ENCODE measurements at regions of chr15 and their contacts with region 1.

Region 1: DNA sequence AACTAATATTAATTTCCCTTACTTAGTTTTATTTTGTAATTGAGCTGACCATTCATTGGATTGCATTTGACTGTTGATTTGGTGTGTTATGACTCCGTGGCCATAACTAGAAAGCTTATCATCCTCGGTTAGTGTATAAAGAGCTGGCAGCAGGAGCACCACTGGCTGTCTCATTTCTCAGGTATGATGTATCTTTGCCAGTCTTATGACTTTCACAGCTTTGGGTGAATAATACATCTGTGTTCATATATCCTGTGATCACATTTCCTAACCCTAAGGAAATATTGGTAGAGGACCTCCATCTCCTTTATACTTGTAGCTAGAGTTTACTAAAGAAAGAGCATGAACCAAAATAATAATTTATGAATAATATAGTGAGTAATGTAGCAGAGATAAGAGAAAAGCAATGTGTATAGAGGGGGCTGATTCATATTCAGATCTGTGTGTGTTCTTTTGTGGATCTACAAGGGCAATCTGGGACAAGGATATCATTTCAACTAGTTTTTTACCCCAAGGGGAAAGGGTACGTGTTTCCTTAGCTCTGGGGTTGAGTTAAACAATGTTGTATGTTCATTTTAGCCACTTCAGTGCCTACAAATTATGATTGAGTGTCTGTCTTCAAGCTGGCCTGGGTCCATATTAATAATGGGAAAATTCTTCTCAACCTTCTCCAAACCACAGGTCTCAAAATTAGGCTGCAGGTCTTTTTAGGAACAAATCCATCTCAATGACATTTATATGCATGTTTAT is 901.7 kb downstream of the NTRK3 start:
- DNase-seq: no peak
- ATAC-seq: no peak
- H3K4me3 ChIP-seq: no peak overlapping the region
- H3K27ac ChIP-seq: no peak overlapping the region
- H3K4me1 ChIP-seq: peaks cover 0 to 5% (median 0%) of the 10 kb centered on the region in 9 donors
- H3K27me3 ChIP-seq: no peaks in the 10 kb centered on the region
- CTCF ChIP-seq: no peak

Region 2: DNA sequence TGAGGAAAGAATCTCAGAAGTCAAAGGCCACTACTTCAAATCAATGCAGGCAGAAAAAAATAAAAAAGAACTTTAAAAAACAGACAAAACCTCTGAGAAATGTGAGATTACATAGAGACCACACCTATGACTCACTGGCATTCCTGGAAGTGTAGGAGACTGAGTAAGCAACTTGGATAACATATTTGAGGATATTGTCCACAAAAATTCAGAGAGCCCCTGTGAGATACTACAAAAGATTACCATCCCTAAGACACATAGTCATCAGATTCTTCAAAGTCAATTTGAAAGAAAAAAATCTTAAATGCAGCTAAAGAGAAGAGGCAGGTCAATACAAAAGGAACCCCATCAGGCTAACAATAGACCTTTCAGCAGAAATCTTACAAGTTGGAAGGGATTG is 14.4 kb after region 1 on chr15:
- intact Hi-C with region 1: loop called in 1 of 10 experiments (anchors 1 kb)
- DNase-seq: no peak
- ATAC-seq: no peak
- H3K4me3 ChIP-seq: no peak overlapping the region
- H3K27ac ChIP-seq: no peak overlapping the region
- H3K4me1 ChIP-seq: no peaks in the 10 kb centered on the region
- H3K27me3 ChIP-seq: no peaks in the 10 kb centered on the region
- CTCF ChIP-seq: no peak

Measured in heart right ventricle (tissue), 16 donors.